GM23248 (cell line): ENCODE measurements at regions of chr15 and their contacts with region 1.

Region 1: GRCh38 chr15:30650012-30650929 is 24.3 kb downstream of the ARHGAP11B start:
- DNase-seq: peak; percentile 41
- H3K4me3 ChIP-seq: no peak overlapping the region
- H3K27ac ChIP-seq: peak overlapping the region; percentile 11; the same call in 1 of the 2 replicates
- H3K4me1 ChIP-seq: no peaks in the 10 kb centered on the region
- H3K27me3 ChIP-seq: no peaks in the 10 kb centered on the region

Region 2: DNA sequence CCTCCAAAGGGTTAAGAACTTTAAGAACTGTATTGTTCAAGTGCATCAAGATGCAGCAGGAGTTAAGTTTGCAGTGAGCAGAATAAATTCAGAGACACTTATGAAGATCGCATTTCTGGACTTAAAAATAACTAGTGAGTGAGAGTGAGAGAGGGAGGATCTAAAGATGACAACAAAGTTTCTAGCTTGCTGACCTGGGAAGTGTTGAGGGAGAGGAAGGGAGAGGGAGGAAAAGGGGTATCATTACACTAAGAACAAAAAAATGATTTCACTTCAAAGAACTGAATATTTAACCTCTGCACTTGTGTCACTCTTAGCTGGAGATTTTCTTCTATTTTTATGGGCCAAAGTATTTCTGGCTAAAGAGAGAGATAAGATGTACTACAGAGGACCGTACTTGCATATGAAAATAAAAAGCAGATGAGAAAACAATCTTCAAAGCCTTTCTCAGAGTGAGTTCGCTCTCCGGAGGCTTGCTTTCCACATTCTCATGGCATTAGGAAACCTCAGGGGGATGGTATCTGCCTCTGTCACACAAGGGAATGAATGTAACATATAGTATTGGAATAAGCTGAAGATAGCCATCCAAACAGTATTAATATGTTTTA is 736.6 kb before region 1 on chr15:
- in situ Hi-C with region 1: no loop called
- DNase-seq: peak; percentile 81
- H3K4me3 ChIP-seq: peak overlapping the region; percentile 25
- H3K27ac ChIP-seq: peak overlapping the region; percentile 54
- H3K4me1 ChIP-seq: peaks cover 26% of the 10 kb centered on the region
- H3K27me3 ChIP-seq: no peaks in the 10 kb centered on the region

Region 3: GRCh38 chr15:30962079-30962478 is 311.8 kb after region 1 on chr15:
- in situ Hi-C with region 1: no loop called
- DNase-seq: no peak
- H3K4me3 ChIP-seq: no peak overlapping the region
- H3K27ac ChIP-seq: no peak overlapping the region
- H3K4me1 ChIP-seq: no peaks in the 10 kb centered on the region
- H3K27me3 ChIP-seq: no peaks in the 10 kb centered on the region

Region 4: DNA sequence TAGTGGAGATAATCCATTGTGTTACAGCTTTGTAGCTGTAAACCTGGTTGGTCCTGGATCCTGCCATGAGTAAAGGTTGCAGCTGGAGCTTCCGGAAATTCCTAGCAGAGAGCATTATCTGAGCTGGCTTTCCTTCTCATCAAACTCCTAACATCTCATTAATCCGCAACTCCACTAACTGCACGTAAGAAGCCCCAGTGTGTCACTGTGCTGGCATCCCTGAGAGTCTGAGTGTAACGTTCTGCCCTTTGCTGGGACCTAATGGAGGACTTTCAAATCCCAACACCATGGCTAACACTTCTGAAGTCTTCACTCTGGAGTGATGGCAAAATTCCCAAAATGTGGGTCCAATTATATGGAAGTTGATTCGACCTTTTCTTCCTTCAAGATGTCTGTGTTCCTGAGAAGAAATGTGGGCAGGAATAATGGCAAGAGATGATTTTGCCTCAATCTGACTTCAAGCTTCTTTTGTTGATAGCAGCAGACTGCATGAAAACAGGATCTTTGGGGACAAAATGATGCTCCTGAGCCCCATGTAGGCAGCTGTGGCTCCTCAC is 460.9 kb after region 1 on chr15:
- in situ Hi-C with region 1: no loop called
- DNase-seq: peak; percentile 31
- H3K4me3 ChIP-seq: no peak overlapping the region
- H3K27ac ChIP-seq: no peak overlapping the region
- H3K4me1 ChIP-seq: no peaks in the 10 kb centered on the region
- H3K27me3 ChIP-seq: no peaks in the 10 kb centered on the region

Region 5: DNA sequence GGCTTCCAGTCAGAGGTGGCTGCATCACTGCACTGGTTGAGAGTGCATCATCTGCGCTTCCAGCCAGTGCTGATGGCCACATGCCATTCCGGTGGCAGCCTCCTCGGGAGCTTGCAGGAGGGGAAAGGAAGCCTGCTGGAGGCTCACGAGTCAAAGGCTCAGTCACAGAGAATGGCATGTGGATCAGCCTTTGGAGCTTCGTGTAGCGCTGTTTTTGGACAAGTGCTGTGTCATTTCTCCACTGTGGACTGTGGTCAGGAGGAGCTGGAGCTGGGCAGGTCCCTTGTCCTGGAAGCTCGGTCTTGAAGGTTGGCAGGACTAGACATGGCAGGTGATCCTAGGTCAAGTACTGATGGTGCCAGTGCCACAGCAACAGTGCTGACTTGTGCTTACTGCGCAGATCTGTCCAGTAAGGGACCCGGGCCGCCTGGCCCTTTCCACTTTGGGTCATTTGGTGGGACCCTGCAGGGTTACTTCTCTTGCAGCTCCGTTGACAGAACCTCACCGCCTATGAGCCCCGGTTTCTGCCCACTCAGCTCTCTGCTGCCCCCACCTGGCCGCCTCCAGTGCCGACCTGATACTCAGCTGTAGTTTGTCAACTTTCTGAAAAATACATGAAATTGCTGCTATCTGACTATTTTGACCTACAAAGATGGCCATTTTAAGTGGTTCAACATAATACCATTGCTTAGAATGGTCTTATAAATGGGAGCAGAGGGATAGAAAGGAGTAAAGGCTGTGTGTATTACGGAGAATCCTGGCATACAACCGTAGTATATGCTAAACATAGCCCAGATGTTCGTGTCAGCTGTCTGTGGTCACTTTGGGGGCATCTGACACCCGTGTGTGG is 478.9 kb after region 1 on chr15:
- in situ Hi-C with region 1: loop called (anchors 25 kb)
- DNase-seq: peak; percentile 69
- H3K4me3 ChIP-seq: no peak overlapping the region
- H3K27ac ChIP-seq: no peak overlapping the region
- H3K4me1 ChIP-seq: no peaks in the 10 kb centered on the region
- H3K27me3 ChIP-seq: peaks cover 4% of the 10 kb centered on the region